Activated CD8-positive, alpha-beta T cell treated with anti-CD3 and anti-CD28 coated beads, Interleukin-2, amount 10 ng/mL, durations not matched to agents 7 days and 5 days (primary cell): ENCODE measurements at regions of chr15 and their contacts with region 1.

Region 1: DNA sequence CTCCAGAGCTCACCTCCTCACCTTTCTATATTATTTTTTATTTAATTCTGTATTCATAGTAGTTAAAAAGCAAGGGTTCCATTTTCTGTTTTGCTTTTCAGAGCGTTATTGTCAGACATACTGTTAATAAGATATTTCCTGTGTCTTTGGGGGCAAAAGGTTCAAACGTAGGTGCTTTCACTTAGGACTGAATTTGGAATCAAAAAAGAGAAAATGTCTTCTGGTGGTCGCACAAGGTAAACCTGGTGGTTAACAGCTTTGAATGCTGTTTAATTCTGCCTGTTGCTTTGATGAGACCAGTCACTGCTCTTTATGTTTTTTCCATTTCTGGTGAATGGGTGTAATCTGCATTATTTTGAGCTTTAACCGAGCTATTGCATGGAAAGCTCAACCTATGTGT is 212.5 kb downstream of the TCF12 start:
- DNase-seq: no peak
- ATAC-seq: peak; percentile 39
- H3K4me3 Mint-ChIP-seq: peak overlapping the region; percentile 34
- H3K27ac Mint-ChIP-seq: peak overlapping the region; percentile 46
- H3K4me1 Mint-ChIP-seq: peaks cover 49% of the 10 kb centered on the region
- H3K27me3 Mint-ChIP-seq: no peaks in the 10 kb centered on the region

Region 2: DNA sequence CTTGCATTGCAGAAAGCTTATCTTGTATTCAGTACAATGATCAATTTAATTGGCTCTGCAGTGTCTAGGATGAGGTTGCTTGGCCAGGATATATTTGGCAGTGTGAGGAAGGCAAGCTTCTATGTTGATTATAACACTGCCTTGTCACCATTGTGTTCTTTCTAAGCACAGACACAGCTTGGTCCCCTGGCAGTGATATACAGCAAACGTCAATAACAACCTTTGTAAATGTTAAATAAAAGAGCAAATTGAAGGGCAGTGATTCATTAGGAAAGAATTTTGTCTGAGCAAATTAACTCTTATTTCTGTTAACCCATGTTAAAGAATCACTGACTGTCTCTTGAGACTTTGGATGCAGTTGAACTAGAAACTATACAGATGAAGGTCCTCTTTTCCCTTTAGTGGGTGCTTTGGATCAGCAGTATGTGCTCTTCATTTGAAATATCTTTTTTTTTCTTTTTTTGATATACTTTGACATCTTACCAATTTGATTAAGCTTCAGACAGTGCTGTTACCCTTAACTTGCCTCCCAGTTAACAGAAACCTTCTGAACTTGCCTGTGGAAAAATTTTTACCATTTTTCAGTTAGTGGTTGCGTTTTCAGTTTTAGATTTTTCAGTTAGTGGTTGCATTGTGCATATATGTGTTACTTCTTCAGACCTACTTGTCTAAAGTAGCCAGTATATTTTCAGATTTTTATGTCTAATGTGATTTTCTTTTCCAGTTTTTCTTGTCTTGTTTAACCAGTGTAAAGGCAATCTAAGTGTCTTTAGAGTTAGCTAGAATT is 12.8 kb before region 1 on chr15:
- CTCF ChIA-PET with region 1: interaction called, 11 read pairs
- POLR2A ChIA-PET with region 1: no interaction called
- DNase-seq: no peak
- ATAC-seq: no peak
- H3K4me3 Mint-ChIP-seq: no peak overlapping the region
- H3K27ac Mint-ChIP-seq: peak overlapping the region; percentile 40
- H3K4me1 Mint-ChIP-seq: peaks cover 31% of the 10 kb centered on the region
- H3K27me3 Mint-ChIP-seq: no peaks in the 10 kb centered on the region

Region 3: GRCh38 chr15:57323806-57324589 is 193.0 kb after region 1 on chr15:
- CTCF ChIA-PET with region 1: no interaction called
- POLR2A ChIA-PET with region 1: no interaction called
- DNase-seq: peak; percentile 26
- ATAC-seq: peak; percentile 63
- H3K4me3 Mint-ChIP-seq: no peak overlapping the region
- H3K27ac Mint-ChIP-seq: no peak overlapping the region
- H3K4me1 Mint-ChIP-seq: peaks cover 7% of the 10 kb centered on the region
- H3K27me3 Mint-ChIP-seq: no peaks in the 10 kb centered on the region